ENCODE measurements at regions of chr11 and their contacts with region 1.

Region 1: DNA sequence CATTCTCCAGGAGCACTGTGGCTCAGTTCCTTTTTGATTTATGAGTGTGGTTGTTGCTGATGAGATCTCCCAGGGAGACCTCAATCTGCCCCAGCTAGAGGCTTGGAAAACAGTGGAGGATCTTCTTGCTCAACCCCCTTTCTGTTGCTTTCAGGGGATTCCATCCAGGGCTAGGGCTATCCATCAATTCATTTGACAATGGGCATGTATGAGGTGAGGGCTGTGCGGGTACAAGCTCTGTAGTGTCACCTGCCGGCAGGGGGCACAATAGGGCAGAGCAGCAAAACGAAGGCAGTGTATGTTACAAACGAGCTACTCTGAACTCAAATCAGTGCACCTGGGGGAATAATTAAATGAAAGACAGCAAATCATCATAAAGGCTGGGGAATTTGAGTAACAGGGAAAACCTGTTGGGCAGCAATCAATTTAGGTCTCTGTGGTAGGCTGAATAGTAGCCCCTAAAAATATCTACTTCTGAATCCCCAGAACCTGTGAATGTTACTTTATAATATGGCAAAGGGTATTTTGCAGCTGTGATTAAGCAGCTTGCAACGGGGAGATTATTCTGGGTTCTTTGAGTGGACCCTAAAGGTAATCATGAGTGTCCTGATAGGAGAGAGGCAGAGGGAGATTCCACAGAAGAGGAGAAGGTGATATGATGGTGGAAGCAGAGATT is 170.3 kb upstream of the ZBED5 start:
- DNase-seq: peak; percentile 87
- H3K4me3 ChIP-seq: no peak overlapping the region
- H3K27ac ChIP-seq: no peak overlapping the region
- H3K4me1 ChIP-seq: no peaks in the 10 kb centered on the region
- H3K27me3 ChIP-seq: peaks cover 0 to 11% (median 0%) of the 10 kb centered on the region in 7 donors
- CTCF ChIP-seq: peak; percentile 45 to 84 (median 74)
- POLR2A ChIP-seq: no peak

Region 2: GRCh38 chr11:11787305-11788062 is 759.3 kb after region 1 on chr11:
- intact Hi-C with region 1: loop called (anchors 2 kb)
- DNase-seq: peak; percentile 80
- H3K4me3 ChIP-seq: no peak overlapping the region
- H3K27ac ChIP-seq: no peak overlapping the region
- H3K4me1 ChIP-seq: peaks cover 0 to 9% (median 0%) of the 10 kb centered on the region in 6 donors
- H3K27me3 ChIP-seq: peaks cover 0 to 10% (median 0%) of the 10 kb centered on the region in 7 donors
- CTCF ChIP-seq: peak; percentile 66 to 89 (median 84)
- POLR2A ChIP-seq: no peak

Measured in spleen (tissue), 13 donors.